ENCODE measurements at regions of chr4 and their contacts with region 1.

Region 1: DNA sequence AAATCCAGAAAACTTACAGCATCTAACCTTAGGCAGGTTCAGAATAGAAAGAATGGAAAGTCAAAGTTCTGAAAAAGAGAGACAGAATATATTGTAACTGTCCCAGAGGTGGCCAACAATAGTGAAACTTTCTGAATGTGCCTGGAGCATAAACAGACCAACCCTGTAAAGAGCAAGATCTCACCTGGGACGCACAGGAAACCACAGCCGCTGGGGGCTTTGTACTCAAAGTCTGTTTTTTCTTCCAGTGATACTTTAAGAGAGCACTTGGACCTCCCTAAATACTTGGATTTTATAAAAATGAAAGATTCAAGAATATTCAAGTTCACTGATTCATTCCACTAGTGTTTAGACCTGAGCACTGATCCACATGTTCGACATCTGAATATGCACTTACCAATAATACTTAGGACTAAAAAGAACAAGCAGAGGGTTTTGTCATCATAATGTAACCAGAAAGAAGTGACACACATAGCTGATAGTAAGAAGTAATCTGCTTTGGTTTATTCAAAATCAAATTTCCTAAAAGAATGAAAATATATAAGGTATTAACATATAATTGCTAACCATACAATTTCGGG is 35.3 kb downstream of the ARAP2 start:
- DNase-seq: peak; percentile 33 to 48 (median 43)
- H3K4me3 ChIP-seq: no peak overlapping the region
- H3K4me3 Mint-ChIP-seq: peak overlapping the region in 7 of 8 donors; percentile 25 to 85 (median 64)
- H3K27ac ChIP-seq: no peak overlapping the region
- H3K27ac Mint-ChIP-seq: peak overlapping the region; percentile 4 to 91 (median 66)
- H3K4me1 ChIP-seq: peaks cover 40% of the 10 kb centered on the region
- H3K4me1 Mint-ChIP-seq: peaks cover 37 to 78% (median 54%) of the 10 kb centered on the region in 4 donors
- H3K27me3 ChIP-seq: no peaks in the 10 kb centered on the region
- H3K27me3 Mint-ChIP-seq: no peaks in the 10 kb centered on the region

Region 2: GRCh38 chr4:36198068-36198808 is 10.7 kb before region 1 on chr4:
- CTCF ChIA-PET with region 1: interaction called, 12 read pairs
- POLR2A ChIA-PET with region 1: no interaction called
- intact Hi-C with region 1: no loop called
- DNase-seq: no peak
- H3K4me3 ChIP-seq: no peak overlapping the region
- H3K4me3 Mint-ChIP-seq: no peak overlapping the region
- H3K27ac ChIP-seq: no peak overlapping the region
- H3K27ac Mint-ChIP-seq: no peak overlapping the region
- H3K4me1 ChIP-seq: peaks cover 4% of the 10 kb centered on the region
- H3K4me1 Mint-ChIP-seq: peaks cover 14 to 29% (median 23%) of the 10 kb centered on the region in 4 donors
- H3K27me3 ChIP-seq: no peaks in the 10 kb centered on the region
- H3K27me3 Mint-ChIP-seq: no peaks in the 10 kb centered on the region

Region 3: GRCh38 chr4:36222702-36223101 is 13.7 kb after region 1 on chr4:
- CTCF ChIA-PET with region 1: no interaction called
- POLR2A ChIA-PET with region 1: no interaction called
- intact Hi-C with region 1: loop called (anchors 2 kb)
- DNase-seq: no peak
- H3K4me3 ChIP-seq: no peak overlapping the region
- H3K4me3 Mint-ChIP-seq: peak overlapping the region in 3 of 8 donors; percentile 11 to 28 (median 11)
- H3K27ac ChIP-seq: no peak overlapping the region
- H3K27ac Mint-ChIP-seq: peak overlapping the region in 1 of 7 donors; percentile 42
- H3K4me1 ChIP-seq: peaks cover 79% of the 10 kb centered on the region
- H3K4me1 Mint-ChIP-seq: peaks cover 61 to 88% (median 74%) of the 10 kb centered on the region in 4 donors
- H3K27me3 ChIP-seq: no peaks in the 10 kb centered on the region
- H3K27me3 Mint-ChIP-seq: no peaks in the 10 kb centered on the region